ENCODE measurements at regions of chr2 and their contacts with region 1.

Region 1: GRCh38 chr2:85813982-85814801 is 60.4 kb downstream of the ATOH8 start:
- DNase-seq: peak; percentile 91 to 96
- ATAC-seq: peak; percentile 97 to 99 (median 98)
- H3K4me3 ChIP-seq: no peak overlapping the region
- H3K27ac ChIP-seq: no peak overlapping the region
- H3K4me1 ChIP-seq: peaks cover 3% of the 10 kb centered on the region
- H3K27me3 ChIP-seq: no peaks in the 10 kb centered on the region
- CTCF ChIP-seq: peak; percentile 97

Region 2: DNA sequence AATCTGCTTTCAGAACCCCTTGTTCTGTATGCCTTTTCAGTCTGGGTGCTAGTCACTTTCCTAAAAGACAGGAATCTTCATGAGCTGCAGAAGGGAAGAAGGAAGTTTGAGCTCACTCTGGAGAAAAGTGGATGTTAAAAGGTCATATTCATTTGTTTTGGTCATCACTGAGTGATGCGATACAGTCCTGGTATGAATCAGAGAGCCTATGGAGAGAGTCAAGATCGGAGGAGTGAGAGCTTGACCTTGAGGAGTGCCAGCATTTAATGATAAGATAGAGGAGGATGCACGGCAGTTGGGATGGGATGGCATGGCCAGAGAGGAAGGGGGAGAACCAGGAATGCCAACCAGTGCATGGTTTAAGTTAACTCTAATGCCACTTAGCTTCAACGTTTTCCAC is 178.6 kb before region 1 on chr2:
- intact Hi-C with region 1: loop called (anchors 1 to 5 kb)
- DNase-seq: no peak
- ATAC-seq: no peak
- H3K4me3 ChIP-seq: no peak overlapping the region
- H3K27ac ChIP-seq: no peak overlapping the region
- H3K4me1 ChIP-seq: no peaks in the 10 kb centered on the region
- H3K27me3 ChIP-seq: no peaks in the 10 kb centered on the region
- CTCF ChIP-seq: no peak

Region 3: GRCh38 chr2:85678794-85679672 is 135.2 kb before region 1 on chr2:
- intact Hi-C with region 1: loop called in 1 of 2 experiments (anchors 1 kb)
- DNase-seq: peak; percentile 92 to 95
- ATAC-seq: peak; percentile 66 to 84 (median 71)
- H3K4me3 ChIP-seq: no peak overlapping the region
- H3K27ac ChIP-seq: no peak overlapping the region
- H3K4me1 ChIP-seq: peaks cover 26% of the 10 kb centered on the region
- H3K27me3 ChIP-seq: no peaks in the 10 kb centered on the region
- CTCF ChIP-seq: peak; percentile 99

Region 4: GRCh38 chr2:85728883-85729824 is 85.0 kb before region 1 on chr2:
- intact Hi-C with region 1: loop called (anchors 1 to 2 kb)
- DNase-seq: peak; percentile 94 to 97
- ATAC-seq: peak; percentile 79 to 81 (median 80)
- H3K4me3 ChIP-seq: no peak overlapping the region
- H3K27ac ChIP-seq: peak overlapping the region; percentile 98
- H3K4me1 ChIP-seq: peaks cover 48% of the 10 kb centered on the region
- H3K27me3 ChIP-seq: no peaks in the 10 kb centered on the region
- CTCF ChIP-seq: peak; percentile 97

Region 5: DNA sequence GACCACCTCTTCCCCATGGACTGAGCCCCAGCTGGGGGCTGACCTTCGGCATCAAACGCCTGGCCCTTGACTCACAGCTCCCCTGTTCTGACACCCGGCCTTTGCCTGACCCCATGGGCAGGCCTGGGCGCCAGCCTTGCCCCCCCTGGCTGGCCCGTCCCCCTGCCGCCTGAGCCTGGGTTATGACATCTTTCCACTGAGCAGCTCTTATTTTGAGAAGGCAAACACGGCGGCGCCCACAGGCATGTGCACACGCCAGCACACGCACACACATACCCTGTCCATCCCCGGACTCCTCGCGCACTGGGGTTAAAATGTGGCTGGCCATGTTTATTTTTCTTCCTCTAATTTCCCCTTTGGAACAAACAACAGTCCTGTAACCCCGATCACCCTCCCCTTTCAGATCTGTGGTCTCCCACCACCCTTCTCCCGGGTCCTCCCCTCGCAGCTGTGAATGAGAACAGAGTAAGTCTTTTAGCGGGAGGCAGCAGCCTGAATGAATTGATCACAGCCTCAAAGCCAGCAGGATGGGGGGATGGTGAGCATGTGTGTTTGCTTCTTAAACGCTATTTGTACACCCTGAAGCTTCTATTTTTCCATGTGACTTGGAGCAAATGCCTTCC is 72.2 kb before region 1 on chr2:
- intact Hi-C with region 1: loop called in 1 of 2 experiments (anchors 5 kb)
- DNase-seq: peak; percentile 84 to 90
- ATAC-seq: peak; percentile 71 to 79 (median 72)
- H3K4me3 ChIP-seq: no peak overlapping the region
- H3K27ac ChIP-seq: peak overlapping the region; percentile 94
- H3K4me1 ChIP-seq: peaks cover 83% of the 10 kb centered on the region
- H3K27me3 ChIP-seq: no peaks in the 10 kb centered on the region
- CTCF ChIP-seq: no peak

Region 6: GRCh38 chr2:85750587-85751575 is 63.3 kb before region 1 on chr2:
- intact Hi-C with region 1: loop called (anchors 2 to 5 kb)
- DNase-seq: peak; percentile 75 to 84
- ATAC-seq: peak; percentile 57 to 68 (median 62)
- H3K4me3 ChIP-seq: peak overlapping the region; percentile 1
- H3K27ac ChIP-seq: peak overlapping the region; percentile 30
- H3K4me1 ChIP-seq: peaks cover 45% of the 10 kb centered on the region
- H3K27me3 ChIP-seq: no peaks in the 10 kb centered on the region
- CTCF ChIP-seq: peak; percentile 83

Region 7: DNA sequence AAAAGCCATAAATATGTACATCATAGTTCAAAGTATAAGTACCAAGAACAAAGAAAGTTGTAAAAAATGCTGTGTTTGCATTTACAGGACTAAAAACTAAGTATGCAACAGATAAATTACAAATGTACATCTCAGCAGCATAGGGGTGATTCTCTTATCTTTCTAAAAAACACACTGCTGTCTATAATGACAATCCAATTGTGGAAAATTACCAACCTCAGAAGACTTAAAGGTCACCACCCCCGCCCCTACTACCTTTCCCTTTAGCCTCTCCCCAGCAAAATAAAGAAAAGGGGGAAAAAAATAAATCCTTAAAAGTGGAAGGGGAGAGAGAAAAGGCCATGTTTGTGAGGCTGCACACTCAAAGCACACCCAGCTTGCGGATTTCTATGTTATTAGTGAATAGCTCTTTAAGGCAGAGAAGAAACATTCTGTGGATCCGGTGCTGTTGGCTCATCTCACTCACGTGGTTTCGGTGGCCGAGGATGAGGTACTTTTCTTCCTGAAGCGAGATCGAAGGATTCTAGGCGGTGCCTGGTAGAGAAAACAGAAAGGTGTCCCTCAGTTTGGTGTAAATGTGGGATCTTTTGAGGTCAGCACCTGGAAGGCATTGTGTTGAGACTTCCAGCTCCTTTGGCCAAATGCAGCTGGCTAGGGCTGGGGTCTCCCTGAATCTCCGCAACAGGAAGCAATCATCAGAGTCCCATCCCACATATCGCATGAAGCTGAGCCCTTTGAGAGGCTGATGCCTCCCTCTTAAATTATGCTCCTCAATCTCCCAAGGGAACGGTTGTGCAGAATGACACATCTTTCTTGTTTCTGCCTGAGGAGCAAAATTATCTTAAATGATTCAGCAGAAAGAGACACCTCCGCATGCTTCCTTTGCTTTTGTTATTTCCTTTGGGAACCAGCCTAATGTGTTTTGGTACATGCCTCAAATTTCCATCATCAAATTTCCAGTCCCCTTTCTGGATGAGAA is 402.7 kb after region 1 on chr2:
- intact Hi-C with region 1: no loop called
- DNase-seq: no peak
- ATAC-seq: peak in 1 of 4 donors; percentile 20
- H3K4me3 ChIP-seq: peak overlapping the region; percentile 34
- H3K27ac ChIP-seq: peak overlapping the region; percentile 2
- H3K4me1 ChIP-seq: peaks cover 9% of the 10 kb centered on the region
- H3K27me3 ChIP-seq: no peaks in the 10 kb centered on the region
- CTCF ChIP-seq: no peak